Activated CD4-positive, alpha-beta T cell treated with anti-CD3 and anti-CD28 coated beads for 36 hours (primary cell): ENCODE measurements at regions of chr7 and their contacts with region 1.

Region 1: GRCh38 chr7:128209229-128210035 is 31.6 kb upstream of the LEP start:
- DNase-seq: peak; percentile 80
- ATAC-seq: peak; percentile 85
- H3K4me3 Mint-ChIP-seq: no peak overlapping the region
- H3K27ac Mint-ChIP-seq: no peak overlapping the region
- H3K4me1 Mint-ChIP-seq: no peaks in the 10 kb centered on the region
- H3K27me3 Mint-ChIP-seq: peaks cover 6% of the 10 kb centered on the region

Region 2: DNA sequence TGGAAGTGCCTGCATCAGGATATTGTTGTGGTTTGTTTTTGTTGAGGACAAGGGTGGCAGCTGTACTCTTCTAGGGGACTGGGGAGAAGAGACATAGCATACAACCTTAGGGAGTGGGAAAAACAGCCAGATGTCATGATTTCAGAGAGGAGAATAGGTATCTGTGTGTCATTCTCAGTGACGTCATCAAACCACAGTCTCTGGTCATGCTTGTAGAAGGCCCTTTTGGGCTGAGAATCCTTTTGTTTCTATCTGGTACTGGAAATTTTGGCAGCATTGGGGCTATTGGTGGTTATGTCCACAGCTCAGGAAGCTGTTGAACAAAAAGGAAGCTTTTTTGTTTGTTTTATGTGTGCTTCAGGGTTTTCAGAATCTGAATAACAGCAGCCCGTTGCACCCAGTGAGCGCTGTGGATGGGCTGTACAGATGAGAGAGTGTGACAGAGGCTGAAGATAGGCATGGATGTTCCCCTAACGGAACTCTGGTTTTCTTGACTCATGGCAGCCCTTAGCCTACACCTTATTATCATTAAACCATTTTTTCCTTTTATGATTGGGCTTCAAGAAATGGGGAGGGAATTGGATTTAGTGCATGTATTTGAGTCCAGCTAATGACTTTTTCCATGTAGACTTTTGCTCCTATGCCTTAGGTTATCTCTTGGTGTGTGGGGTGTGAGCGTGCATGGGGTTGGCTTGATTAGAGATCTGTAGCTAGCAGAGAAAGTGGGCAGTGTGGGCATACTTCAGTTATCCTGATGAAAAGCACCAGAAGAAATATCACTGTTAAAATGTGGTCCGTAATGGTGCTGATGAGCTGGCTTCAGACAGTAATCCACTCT is 491.7 kb before region 1 on chr7:
- CTCF ChIA-PET with region 1: interaction called, 14 read pairs
- POLR2A ChIA-PET with region 1: no interaction called
- intact Hi-C with region 1: no loop called
- DNase-seq: peak; percentile 19
- ATAC-seq: peak; percentile 78
- H3K4me3 Mint-ChIP-seq: no peak overlapping the region
- H3K27ac Mint-ChIP-seq: no peak overlapping the region
- H3K4me1 Mint-ChIP-seq: peaks cover 13% of the 10 kb centered on the region
- H3K27me3 Mint-ChIP-seq: no peaks in the 10 kb centered on the region

Region 3: GRCh38 chr7:128104035-128104742 is 105.2 kb before region 1 on chr7:
- CTCF ChIA-PET with region 1: interaction called, 20 read pairs
- POLR2A ChIA-PET with region 1: interaction called, 3 read pairs
- intact Hi-C with region 1: no loop called
- DNase-seq: peak; percentile 40
- ATAC-seq: peak; percentile 9
- H3K4me3 Mint-ChIP-seq: peak overlapping the region; percentile 76
- H3K27ac Mint-ChIP-seq: no peak overlapping the region
- H3K4me1 Mint-ChIP-seq: peaks cover 53% of the 10 kb centered on the region
- H3K27me3 Mint-ChIP-seq: peaks cover 2% of the 10 kb centered on the region

Region 4: GRCh38 chr7:128135515-128136214 is 73.8 kb before region 1 on chr7:
- CTCF ChIA-PET with region 1: interaction called, 88 read pairs
- POLR2A ChIA-PET with region 1: no interaction called
- intact Hi-C with region 1: loop called (anchors 1 kb)
- DNase-seq: peak; percentile 83
- ATAC-seq: peak; percentile 92
- H3K4me3 Mint-ChIP-seq: peak overlapping the region; percentile 63
- H3K27ac Mint-ChIP-seq: no peak overlapping the region
- H3K4me1 Mint-ChIP-seq: peaks cover 21% of the 10 kb centered on the region
- H3K27me3 Mint-ChIP-seq: peaks cover 27% of the 10 kb centered on the region

Region 5: GRCh38 chr7:128221929-128222403 is 12.5 kb after region 1 on chr7:
- CTCF ChIA-PET with region 1: interaction called, 29 read pairs
- POLR2A ChIA-PET with region 1: no interaction called
- intact Hi-C with region 1: no loop called
- DNase-seq: peak; percentile 33
- ATAC-seq: peak; percentile 85
- H3K4me3 Mint-ChIP-seq: no peak overlapping the region
- H3K27ac Mint-ChIP-seq: no peak overlapping the region
- H3K4me1 Mint-ChIP-seq: no peaks in the 10 kb centered on the region
- H3K27me3 Mint-ChIP-seq: peaks cover 16% of the 10 kb centered on the region